ENCODE measurements at regions of chr13 and their contacts with region 1.

Region 1: DNA sequence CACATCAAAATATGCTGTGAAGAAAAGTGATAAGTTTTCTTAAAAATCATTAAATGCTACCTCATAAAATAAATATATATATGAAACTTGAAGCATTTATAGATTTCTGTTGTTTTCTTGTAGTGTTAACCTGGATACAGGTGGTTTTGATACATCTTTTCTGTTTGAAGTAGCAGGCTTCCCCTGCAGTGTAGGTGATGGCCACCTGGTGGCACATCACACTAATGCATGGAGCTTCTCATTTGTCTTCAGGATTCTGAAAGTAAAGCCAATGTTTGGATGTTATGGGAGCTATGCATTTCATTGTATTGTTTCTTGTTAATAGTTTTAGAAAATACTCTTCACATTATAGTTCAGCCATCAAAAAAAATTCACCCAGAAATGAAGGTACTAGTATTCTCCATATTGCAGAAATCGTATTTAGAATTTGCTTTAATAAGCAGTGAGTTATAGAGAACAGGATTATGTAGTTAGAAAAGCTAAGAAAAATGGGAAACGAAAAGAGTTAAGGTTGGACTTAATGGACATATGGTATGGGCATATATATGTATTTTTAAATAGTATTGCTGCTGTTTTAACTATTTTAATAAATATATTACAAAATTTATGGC is 18.7 kb downstream of the GPR180 start:
- DNase-seq: peak; percentile 42
- H3K4me3 Mint-ChIP-seq: no peak overlapping the region
- H3K27ac Mint-ChIP-seq: no peak overlapping the region
- H3K4me1 Mint-ChIP-seq: peaks cover 8% of the 10 kb centered on the region
- H3K27me3 Mint-ChIP-seq: no peaks in the 10 kb centered on the region

Region 2: GRCh38 chr13:94435604-94436226 is 184.7 kb before region 1 on chr13:
- CTCF ChIA-PET with region 1: interaction called, 185 read pairs
- POLR2A ChIA-PET with region 1: interaction called, 3 read pairs
- DNase-seq: no peak
- H3K4me3 Mint-ChIP-seq: no peak overlapping the region
- H3K27ac Mint-ChIP-seq: no peak overlapping the region
- H3K4me1 Mint-ChIP-seq: peaks cover 4% of the 10 kb centered on the region
- H3K27me3 Mint-ChIP-seq: peaks cover 5% of the 10 kb centered on the region

Region 3: GRCh38 chr13:94549232-94550061 is 70.9 kb before region 1 on chr13:
- CTCF ChIA-PET with region 1: interaction called, 17 read pairs
- POLR2A ChIA-PET with region 1: interaction called, 9 read pairs
- DNase-seq: peak; percentile 90
- H3K4me3 Mint-ChIP-seq: peak overlapping the region; percentile 94
- H3K27ac Mint-ChIP-seq: peak overlapping the region; percentile 91
- H3K4me1 Mint-ChIP-seq: peaks cover 16% of the 10 kb centered on the region
- H3K27me3 Mint-ChIP-seq: peaks cover 8% of the 10 kb centered on the region

Region 4: DNA sequence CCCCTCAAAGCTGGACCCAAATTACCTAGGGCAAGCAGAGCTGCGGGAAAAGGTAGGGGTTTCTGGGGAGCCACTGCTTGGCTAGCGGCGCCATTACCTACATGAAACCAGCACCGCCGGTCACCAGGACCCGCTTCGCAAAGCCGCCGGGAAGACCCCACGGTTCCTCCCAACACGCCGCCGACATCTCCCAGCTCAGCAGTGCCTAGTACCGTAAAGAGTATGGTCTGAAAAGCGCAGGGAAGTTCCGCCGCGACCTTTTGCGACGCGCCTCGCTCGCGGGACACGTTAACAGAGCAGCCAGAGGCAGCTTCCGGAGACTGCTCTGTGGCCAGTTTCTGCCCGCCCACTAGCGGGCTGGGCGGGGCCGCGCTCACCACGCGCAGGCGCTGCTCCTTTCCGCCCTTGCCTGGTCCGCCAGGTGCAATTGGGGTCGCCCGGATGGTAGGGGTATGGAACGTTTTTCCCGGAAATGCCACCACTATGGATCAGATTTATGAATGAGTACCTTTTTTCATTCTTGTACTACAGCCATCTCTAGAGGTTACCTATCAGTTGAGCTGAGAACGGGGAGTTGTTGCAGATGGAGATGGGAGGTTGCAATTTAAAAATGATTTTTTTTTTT is 24.3 kb before region 1 on chr13 and contains the start of gene TGDS:
- CTCF ChIA-PET with region 1: interaction called, 24 read pairs
- POLR2A ChIA-PET with region 1: interaction called, 6 read pairs
- DNase-seq: peak; percentile 92
- H3K4me3 Mint-ChIP-seq: peak within 1 kb of the TSS; percentile 86
- H3K27ac Mint-ChIP-seq: peak within 1 kb of the TSS; percentile 87
- H3K4me1 Mint-ChIP-seq: peaks cover 41% of the 10 kb centered on the region
- H3K27me3 Mint-ChIP-seq: no peaks in the 10 kb centered on the region
- total RNA-seq, gene TGDS: 18.3 to 19.7 TPM

Region 5: GRCh38 chr13:94601446-94602431 is 18.7 kb before region 1 on chr13 and contains the start of gene GPR180:
- CTCF ChIA-PET with region 1: interaction called, 24 read pairs
- POLR2A ChIA-PET with region 1: interaction called, 9 read pairs
- DNase-seq: peak; percentile 94
- H3K4me3 Mint-ChIP-seq: peak within 1 kb of the TSS; percentile 82
- H3K27ac Mint-ChIP-seq: peak within 1 kb of the TSS; percentile 66
- H3K4me1 Mint-ChIP-seq: peaks cover 44% of the 10 kb centered on the region
- H3K27me3 Mint-ChIP-seq: no peaks in the 10 kb centered on the region
- total RNA-seq, gene GPR180: 7.8 to 8.0 TPM

Region 6: GRCh38 chr13:94608586-94608985 is 11.8 kb before region 1 on chr13:
- CTCF ChIA-PET with region 1: interaction called, 24 read pairs
- POLR2A ChIA-PET with region 1: no interaction called
- DNase-seq: no peak
- H3K4me3 Mint-ChIP-seq: no peak overlapping the region
- H3K27ac Mint-ChIP-seq: no peak overlapping the region
- H3K4me1 Mint-ChIP-seq: peaks cover 33% of the 10 kb centered on the region
- H3K27me3 Mint-ChIP-seq: no peaks in the 10 kb centered on the region

Region 7: DNA sequence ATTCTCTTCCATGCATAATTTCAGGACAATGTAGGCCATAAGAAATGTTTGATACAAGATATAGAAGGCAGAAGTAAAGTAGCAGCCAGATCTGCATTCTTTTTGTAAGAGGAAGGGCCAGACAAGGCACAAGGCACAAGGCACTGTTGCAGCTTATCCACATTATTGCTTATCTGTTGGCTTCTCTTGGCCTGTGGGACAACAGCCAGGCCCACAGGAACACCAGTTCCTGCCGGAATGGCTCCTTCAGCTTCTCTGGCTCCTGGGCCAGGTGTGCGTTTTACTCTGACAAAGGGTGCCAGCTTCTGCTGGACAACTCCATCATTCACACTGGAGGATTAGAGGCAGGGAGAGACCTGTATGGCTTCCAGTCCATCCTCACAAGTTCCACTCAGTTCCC is 10.5 kb after region 1 on chr13:
- CTCF ChIA-PET with region 1: interaction called, 18 read pairs
- POLR2A ChIA-PET with region 1: no interaction called
- DNase-seq: no peak
- H3K4me3 Mint-ChIP-seq: no peak overlapping the region
- H3K27ac Mint-ChIP-seq: no peak overlapping the region
- H3K4me1 Mint-ChIP-seq: no peaks in the 10 kb centered on the region
- H3K27me3 Mint-ChIP-seq: no peaks in the 10 kb centered on the region

Region 8: DNA sequence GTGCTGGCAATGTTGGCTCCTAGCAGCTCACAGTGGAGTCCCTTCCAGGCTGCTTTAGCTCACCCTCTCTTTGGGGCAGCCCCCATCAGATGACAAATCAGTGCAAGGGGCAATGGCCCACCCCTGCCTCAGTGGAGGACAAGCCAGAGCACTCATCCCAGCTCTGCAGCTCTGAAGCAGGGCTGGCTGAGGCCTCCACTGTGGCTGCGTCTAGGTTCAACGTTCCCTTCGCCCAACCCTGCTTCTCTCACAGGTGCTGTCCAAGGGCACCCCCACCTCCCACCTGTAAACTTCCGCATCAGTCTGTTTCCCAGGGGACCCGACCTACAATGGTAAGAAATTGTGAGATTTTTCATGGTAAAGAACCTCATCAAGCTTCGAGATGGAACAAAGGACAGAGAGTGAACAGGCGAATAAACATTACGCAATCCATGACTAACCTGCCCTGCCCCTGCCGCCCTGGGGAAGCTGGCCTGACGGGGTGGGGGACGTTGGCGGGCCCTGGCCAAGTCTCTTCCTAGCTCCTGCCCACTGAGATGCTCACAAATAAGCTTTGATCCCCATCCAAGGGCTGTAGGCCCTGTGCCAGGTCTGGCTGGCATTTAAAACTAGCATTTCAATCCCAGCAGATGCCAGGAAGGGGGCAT is 983.6 kb after region 1 on chr13:
- CTCF ChIA-PET with region 1: no interaction called
- POLR2A ChIA-PET with region 1: no interaction called
- DNase-seq: no peak
- H3K4me3 Mint-ChIP-seq: no peak overlapping the region
- H3K27ac Mint-ChIP-seq: no peak overlapping the region
- H3K4me1 Mint-ChIP-seq: no peaks in the 10 kb centered on the region
- H3K27me3 Mint-ChIP-seq: peaks cover 6% of the 10 kb centered on the region